ENCODE measurements at regions of chrX and their contacts with region 1.

Region 1: DNA sequence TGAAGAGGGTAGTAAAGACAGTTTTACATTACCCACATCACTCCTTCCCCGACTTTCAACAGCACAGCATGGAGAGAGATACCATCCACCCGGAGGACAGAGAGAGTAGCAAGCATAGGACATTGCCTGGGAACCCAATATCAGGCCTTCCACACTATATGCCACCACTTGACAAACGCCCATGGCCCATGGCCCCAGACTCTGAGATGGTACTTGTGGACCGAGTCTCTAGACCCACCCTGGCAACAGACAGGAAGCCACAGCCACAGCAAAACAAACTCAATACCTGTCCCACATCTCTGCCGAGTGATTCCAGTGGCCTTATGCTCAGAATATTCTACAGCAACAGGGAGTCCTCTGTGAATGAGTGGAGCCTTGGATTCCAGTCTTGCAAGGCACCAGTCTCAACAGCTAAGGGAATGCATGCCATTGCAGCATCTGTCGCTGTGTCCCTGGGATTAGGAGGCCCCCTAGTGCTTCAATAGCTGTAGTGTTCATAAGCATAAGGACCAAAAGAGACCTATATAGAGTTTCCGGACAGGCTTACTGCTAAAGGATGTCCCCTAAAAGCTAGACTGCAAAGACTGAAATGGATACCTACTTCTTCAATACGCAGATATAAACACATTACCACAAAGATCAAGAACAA is 14.7 kb upstream of the CT55 start:
- DNase-seq: peak; percentile 46
- ATAC-seq: peak; percentile 89
- H3K4me3 ChIP-seq: no peak overlapping the region
- H3K27ac ChIP-seq: no peak overlapping the region
- H3K4me1 ChIP-seq: no peaks in the 10 kb centered on the region
- H3K27me3 ChIP-seq: no peaks in the 10 kb centered on the region
- CTCF ChIP-seq: peak; percentile 51
- POLR2A ChIP-seq: no peak
- RAD21 ChIP-seq: peak; percentile 65

Region 2: GRCh38 chrX:135516376-135516775 is 330.5 kb after region 1 on chrX:
- CTCF ChIA-PET with region 1: no interaction called
- POLR2A ChIA-PET with region 1: no interaction called
- dilution Hi-C with region 1: no loop called
- in situ Hi-C with region 1: no loop called
- intact Hi-C with region 1: no loop called
- DNase-seq: no peak
- ATAC-seq: no peak
- H3K4me3 ChIP-seq: no peak overlapping the region
- H3K27ac ChIP-seq: no peak overlapping the region
- H3K4me1 ChIP-seq: no peaks in the 10 kb centered on the region
- H3K27me3 ChIP-seq: no peaks in the 10 kb centered on the region; the same call in 1 of the 2 replicates
- CTCF ChIP-seq: no peak
- POLR2A ChIP-seq: no peak
- RAD21 ChIP-seq: no peak

Region 3: GRCh38 chrX:135596495-135596894 is 410.6 kb after region 1 on chrX:
- CTCF ChIA-PET with region 1: no interaction called
- POLR2A ChIA-PET with region 1: no interaction called
- dilution Hi-C with region 1: no loop called
- in situ Hi-C with region 1: no loop called
- intact Hi-C with region 1: loop called (anchors 5 kb)
- DNase-seq: peak; percentile 16
- ATAC-seq: peak; percentile 84
- H3K4me3 ChIP-seq: no peak overlapping the region
- H3K27ac ChIP-seq: no peak overlapping the region
- H3K4me1 ChIP-seq: no peaks in the 10 kb centered on the region
- H3K27me3 ChIP-seq: peaks cover 1% of the 10 kb centered on the region; the same call in 1 of the 2 replicates
- CTCF ChIP-seq: peak; percentile 55
- POLR2A ChIP-seq: no peak
- RAD21 ChIP-seq: peak; percentile 61

Region 4: GRCh38 chrX:135632353-135632752 is 446.4 kb after region 1 on chrX:
- CTCF ChIA-PET with region 1: no interaction called
- POLR2A ChIA-PET with region 1: no interaction called
- dilution Hi-C with region 1: no loop called
- in situ Hi-C with region 1: no loop called
- intact Hi-C with region 1: no loop called
- DNase-seq: no peak
- ATAC-seq: no peak
- H3K4me3 ChIP-seq: no peak overlapping the region
- H3K27ac ChIP-seq: no peak overlapping the region
- H3K4me1 ChIP-seq: no peaks in the 10 kb centered on the region
- H3K27me3 ChIP-seq: peaks cover 2% of the 10 kb centered on the region; the same call in 1 of the 2 replicates
- CTCF ChIP-seq: no peak
- POLR2A ChIP-seq: no peak
- RAD21 ChIP-seq: no peak

Measured in IMR-90 (cell line).